Activated CD4-positive, alpha-beta T cell treated with anti-CD3 and anti-CD28 coated beads for 36 hours (primary cell): ENCODE measurements at regions of chr10 and their contacts with region 1.

Region 1: DNA sequence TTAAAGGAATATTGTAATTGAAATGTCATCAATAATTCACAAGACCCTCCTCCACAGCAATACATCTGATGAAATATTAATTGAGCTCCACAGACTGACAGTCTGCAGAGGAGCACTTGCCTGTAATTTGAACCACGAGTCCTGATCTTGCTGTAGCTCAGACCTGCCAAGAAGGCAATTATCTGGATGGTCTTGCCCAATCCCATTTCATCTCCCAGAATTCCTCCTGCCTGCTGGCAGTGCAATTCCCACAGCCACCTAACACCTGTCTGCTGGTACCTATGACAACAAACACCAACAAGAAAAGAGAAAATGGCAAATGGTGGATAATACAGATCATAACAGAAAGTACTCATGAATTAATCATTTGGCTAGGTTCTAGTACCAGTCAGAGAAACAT is 38.5 kb downstream of the ERCC6 start:
- DNase-seq: no peak
- ATAC-seq: no peak
- H3K4me3 Mint-ChIP-seq: no peak overlapping the region
- H3K27ac Mint-ChIP-seq: no peak overlapping the region
- H3K4me1 Mint-ChIP-seq: no peaks in the 10 kb centered on the region
- H3K27me3 Mint-ChIP-seq: no peaks in the 10 kb centered on the region

Region 2: GRCh38 chr10:49512121-49512809 is 11.8 kb after region 1 on chr10:
- CTCF ChIA-PET with region 1: interaction called, 12 read pairs
- POLR2A ChIA-PET with region 1: no interaction called
- intact Hi-C with region 1: no loop called
- DNase-seq: peak; percentile 24
- ATAC-seq: peak; percentile 61
- H3K4me3 Mint-ChIP-seq: no peak overlapping the region
- H3K27ac Mint-ChIP-seq: no peak overlapping the region
- H3K4me1 Mint-ChIP-seq: peaks cover 21% of the 10 kb centered on the region
- H3K27me3 Mint-ChIP-seq: peaks cover 4% of the 10 kb centered on the region